OCI-LY7 (cell line): ENCODE measurements at regions of chr22 and their contacts with region 1.

Region 1: GRCh38 chr22:17920145-17920605 is 104.2 kb downstream of the MICAL3 start:
- DNase-seq: no peak
- H3K4me3 ChIP-seq: no peak overlapping the region
- H3K27ac ChIP-seq: no peak overlapping the region
- H3K4me1 ChIP-seq: peaks cover 69% of the 10 kb centered on the region
- CTCF ChIP-seq: no peak

Region 2: DNA sequence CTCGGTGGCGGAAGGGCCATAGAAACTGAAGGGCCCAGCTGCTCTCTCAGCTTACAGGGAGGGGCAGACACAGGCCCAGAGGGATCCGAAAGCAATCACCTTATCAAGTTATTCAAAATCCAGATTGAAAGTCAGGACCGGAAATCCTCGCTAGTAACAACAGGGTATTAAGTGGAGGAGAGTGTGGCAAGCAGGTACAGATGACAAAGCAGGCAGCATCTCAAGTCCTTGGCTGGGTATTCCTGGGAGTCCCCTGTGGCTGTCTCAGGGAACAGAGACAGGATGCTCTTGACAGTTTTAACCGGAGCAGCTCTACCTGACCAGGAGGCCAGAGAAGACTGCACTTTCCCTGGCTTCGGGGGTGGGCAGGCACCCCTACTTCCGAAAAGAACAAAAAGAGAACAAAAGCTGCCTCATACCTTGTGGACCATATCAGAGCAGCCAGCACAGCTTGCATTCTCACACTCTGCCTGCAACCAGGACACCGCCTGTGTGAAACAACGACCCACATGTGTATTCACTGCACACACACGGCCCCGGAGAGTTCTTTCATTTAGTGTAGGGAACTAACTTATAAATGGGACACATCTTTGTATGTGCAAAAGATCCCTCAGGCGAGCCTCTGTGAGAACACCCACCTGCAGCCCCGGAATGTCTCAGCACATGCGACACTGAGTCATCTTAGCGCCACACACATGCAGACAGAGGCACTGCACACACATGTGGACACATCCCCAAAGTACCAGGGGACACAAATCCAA is 25.9 kb after region 1 on chr22:
- CTCF ChIA-PET with region 1: no interaction called
- POLR2A ChIA-PET with region 1: no interaction called
- intact Hi-C with region 1: no loop called
- DNase-seq: peak; percentile 15
- H3K4me3 ChIP-seq: no peak overlapping the region
- H3K27ac ChIP-seq: peak overlapping the region; percentile 1
- H3K4me1 ChIP-seq: peaks cover 63% of the 10 kb centered on the region
- CTCF ChIP-seq: no peak

Region 3: DNA sequence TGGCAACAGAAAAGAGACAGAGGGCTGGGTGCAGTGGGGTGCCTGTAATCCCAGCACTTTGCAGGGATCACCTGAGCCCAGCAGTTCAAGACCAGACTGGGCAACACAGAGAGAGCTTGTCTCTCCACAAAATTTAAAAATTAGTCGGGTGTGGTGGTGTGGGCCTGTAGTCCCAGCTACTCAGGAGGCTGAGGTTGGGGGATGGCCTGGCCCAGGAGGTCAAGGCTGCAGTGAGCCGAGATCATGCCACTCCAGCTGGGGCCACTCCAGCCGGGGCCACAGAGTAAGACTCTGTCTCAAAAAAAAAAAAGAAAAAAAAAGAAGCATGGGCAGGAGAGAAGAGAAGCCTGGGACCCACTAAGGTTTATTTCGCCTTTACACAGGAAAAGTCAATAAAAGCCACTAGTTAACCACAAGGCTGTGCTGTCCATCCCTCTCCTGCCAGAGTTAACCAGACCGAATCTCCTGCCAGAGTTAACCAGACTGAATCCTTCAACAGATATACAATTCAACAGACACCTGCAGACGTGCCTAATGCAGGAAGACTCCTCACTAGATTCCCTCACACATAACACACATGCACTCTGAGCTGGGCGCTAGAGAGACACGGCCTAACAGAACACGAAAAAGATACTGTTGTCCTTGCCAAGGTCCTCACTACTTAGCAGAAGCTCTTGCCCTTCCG is 74.4 kb after region 1 on chr22:
- CTCF ChIA-PET with region 1: no interaction called
- POLR2A ChIA-PET with region 1: interaction called, 3 read pairs
- intact Hi-C with region 1: loop called (anchors 5 kb)
- DNase-seq: peak; percentile 89
- H3K4me3 ChIP-seq: peak overlapping the region; percentile 62
- H3K27ac ChIP-seq: peak overlapping the region; percentile 96
- H3K4me1 ChIP-seq: peaks cover 97% of the 10 kb centered on the region
- CTCF ChIP-seq: peak; percentile 47

Region 4: GRCh38 chr22:18005201-18005926 is 85.2 kb after region 1 on chr22:
- CTCF ChIA-PET with region 1: no interaction called
- POLR2A ChIA-PET with region 1: no interaction called
- intact Hi-C with region 1: no loop called
- DNase-seq: peak; percentile 74
- H3K4me3 ChIP-seq: peak overlapping the region; percentile 43
- H3K27ac ChIP-seq: peak overlapping the region; percentile 85
- H3K4me1 ChIP-seq: peaks cover 56% of the 10 kb centered on the region
- CTCF ChIP-seq: no peak

Region 5: DNA sequence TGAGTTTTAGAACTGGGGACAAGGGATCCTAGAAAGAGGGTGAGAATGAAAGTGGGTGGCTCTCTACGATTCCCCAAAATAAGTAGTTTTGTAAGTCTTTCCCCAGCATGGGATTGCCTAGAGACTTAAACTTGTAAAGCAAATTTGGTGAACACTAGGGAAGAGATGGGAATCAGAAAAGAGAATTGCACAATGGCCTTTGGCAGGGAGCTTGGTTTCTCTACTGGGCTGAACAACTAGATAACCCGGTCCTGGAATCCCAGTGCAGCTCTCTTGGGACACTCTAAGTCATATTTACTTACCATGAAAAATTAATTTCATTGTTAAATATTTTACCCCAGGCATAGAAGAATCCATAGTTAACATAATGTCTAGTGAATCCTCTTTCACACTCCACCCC is 213.3 kb after region 1 on chr22:
- CTCF ChIA-PET with region 1: no interaction called
- POLR2A ChIA-PET with region 1: no interaction called
- intact Hi-C with region 1: no loop called
- DNase-seq: no peak
- H3K4me3 ChIP-seq: no peak overlapping the region
- H3K27ac ChIP-seq: no peak overlapping the region
- H3K4me1 ChIP-seq: no peaks in the 10 kb centered on the region
- CTCF ChIP-seq: no peak